CD4-positive, alpha-beta T cell (primary cell): ENCODE measurements at regions of chr10 and their contacts with region 1.

Region 1: DNA sequence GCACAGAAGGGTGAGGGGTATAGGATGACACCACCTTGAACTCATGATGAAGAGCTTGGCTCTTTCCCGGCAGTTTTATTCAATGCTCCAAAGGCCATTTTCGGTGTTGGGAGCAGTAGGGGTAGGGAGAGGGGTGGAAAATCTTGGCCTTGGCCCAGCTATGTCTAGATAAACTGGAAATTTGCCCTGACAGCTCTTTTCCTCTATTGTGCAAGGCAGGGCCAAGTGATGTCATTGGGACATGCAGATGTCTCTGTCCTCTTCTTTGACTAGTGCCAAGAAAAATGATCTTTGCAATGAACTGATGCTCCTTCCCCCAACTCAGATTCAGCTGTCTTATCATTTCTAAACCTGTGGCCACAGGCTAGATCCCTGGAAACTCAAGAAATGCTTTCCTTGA is 27.7 kb upstream of the PRKCQ start:
- DNase-seq: no peak
- ATAC-seq: no peak
- H3K4me3 ChIP-seq: no peak overlapping the region
- H3K4me3 Mint-ChIP-seq: no peak overlapping the region
- H3K27ac ChIP-seq: peak overlapping the region in 1 of 2 donors; percentile 72
- H3K27ac Mint-ChIP-seq: peak overlapping the region; percentile 90
- H3K4me1 ChIP-seq: peaks cover 18% of the 10 kb centered on the region
- H3K4me1 Mint-ChIP-seq: peaks cover 80% of the 10 kb centered on the region
- H3K27me3 ChIP-seq: no peaks in the 10 kb centered on the region
- H3K27me3 Mint-ChIP-seq: no peaks in the 10 kb centered on the region
- CTCF ChIP-seq: no peak

Region 2: DNA sequence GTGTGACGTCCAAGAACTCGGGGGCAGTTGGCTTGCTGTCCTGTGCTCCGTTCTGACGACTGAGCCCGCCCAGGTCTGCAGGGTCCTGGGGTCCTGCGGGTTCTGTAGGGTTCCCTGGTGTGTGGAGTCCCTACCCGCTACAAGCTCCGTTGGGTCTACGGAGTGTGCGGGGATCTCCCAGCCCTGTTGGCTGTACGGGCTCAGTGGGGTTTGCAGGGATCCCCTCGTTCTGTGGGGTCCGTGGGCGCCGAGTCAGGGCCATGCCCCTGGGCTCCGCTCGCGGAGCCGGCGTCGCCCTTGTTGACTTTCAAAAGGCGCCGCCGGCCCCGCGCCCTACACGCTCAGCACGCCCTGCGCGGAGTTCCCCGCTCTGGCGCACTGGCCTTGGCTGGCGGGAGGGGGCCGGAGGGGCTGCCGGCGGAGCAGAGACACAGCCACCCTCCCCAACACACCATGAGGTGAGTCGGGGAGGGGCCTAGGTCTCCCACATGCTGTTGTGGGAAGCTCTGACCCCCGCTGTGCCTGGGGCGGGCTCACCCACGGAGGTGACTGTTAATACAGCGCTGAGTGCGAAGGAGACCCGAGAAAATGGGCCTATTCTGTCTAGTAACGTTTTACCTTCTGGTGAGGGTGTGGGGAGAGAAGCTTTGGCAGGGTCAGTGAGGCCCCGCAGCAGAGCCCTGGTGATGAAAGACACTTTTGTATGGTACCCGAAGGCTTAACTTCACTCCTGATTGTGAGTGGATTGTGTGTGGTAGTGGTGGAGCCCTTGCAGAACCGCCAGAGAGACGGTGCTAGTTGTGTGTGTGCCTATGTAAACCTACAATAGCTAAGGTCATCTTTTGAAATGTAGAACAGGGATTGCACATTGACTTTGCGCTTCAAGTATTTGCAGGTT is 915.1 kb before region 1 on chr10:
- CTCF ChIA-PET with region 1: no interaction called
- POLR2A ChIA-PET with region 1: no interaction called
- intact Hi-C with region 1: no loop called
- DNase-seq: peak; percentile 27 to 85 (median 54)
- ATAC-seq: peak; percentile 90
- H3K4me3 ChIP-seq: peak overlapping the region; percentile 57
- H3K4me3 Mint-ChIP-seq: peak overlapping the region; percentile 85
- H3K27ac ChIP-seq: no peak overlapping the region
- H3K27ac Mint-ChIP-seq: peak overlapping the region; percentile 66
- H3K4me1 ChIP-seq: peaks cover 41% of the 10 kb centered on the region
- H3K4me1 Mint-ChIP-seq: peaks cover 85% of the 10 kb centered on the region
- H3K27me3 ChIP-seq: no peaks in the 10 kb centered on the region
- H3K27me3 Mint-ChIP-seq: no peaks in the 10 kb centered on the region
- CTCF ChIP-seq: no peak

Region 3: GRCh38 chr10:6416892-6417512 is 190.8 kb before region 1 on chr10:
- CTCF ChIA-PET with region 1: no interaction called
- POLR2A ChIA-PET with region 1: no interaction called
- intact Hi-C with region 1: loop called in 1 of 2 experiments (anchors 5 kb)
- DNase-seq: peak in 4 of 14 experiments; percentile 22 to 76 (median 74)
- ATAC-seq: peak; percentile 76
- H3K4me3 ChIP-seq: no peak overlapping the region
- H3K4me3 Mint-ChIP-seq: no peak overlapping the region
- H3K27ac ChIP-seq: no peak overlapping the region
- H3K27ac Mint-ChIP-seq: no peak overlapping the region
- H3K4me1 ChIP-seq: no peaks in the 10 kb centered on the region
- H3K4me1 Mint-ChIP-seq: peaks cover 5% of the 10 kb centered on the region
- H3K27me3 ChIP-seq: no peaks in the 10 kb centered on the region
- H3K27me3 Mint-ChIP-seq: no peaks in the 10 kb centered on the region
- CTCF ChIP-seq: peak; percentile 86

Region 4: GRCh38 chr10:6445501-6446316 is 162.1 kb before region 1 on chr10:
- CTCF ChIA-PET with region 1: interaction called, 5 read pairs
- POLR2A ChIA-PET with region 1: no interaction called
- intact Hi-C with region 1: loop called in 1 of 2 experiments (anchors 5 kb)
- DNase-seq: peak; percentile 27 to 79 (median 61)
- ATAC-seq: peak; percentile 64
- H3K4me3 ChIP-seq: no peak overlapping the region
- H3K4me3 Mint-ChIP-seq: no peak overlapping the region
- H3K27ac ChIP-seq: no peak overlapping the region
- H3K27ac Mint-ChIP-seq: peak overlapping the region; percentile 68
- H3K4me1 ChIP-seq: peaks cover 11% of the 10 kb centered on the region
- H3K4me1 Mint-ChIP-seq: peaks cover 30% of the 10 kb centered on the region
- H3K27me3 ChIP-seq: no peaks in the 10 kb centered on the region
- H3K27me3 Mint-ChIP-seq: no peaks in the 10 kb centered on the region
- CTCF ChIP-seq: peak; percentile 77

Region 5: DNA sequence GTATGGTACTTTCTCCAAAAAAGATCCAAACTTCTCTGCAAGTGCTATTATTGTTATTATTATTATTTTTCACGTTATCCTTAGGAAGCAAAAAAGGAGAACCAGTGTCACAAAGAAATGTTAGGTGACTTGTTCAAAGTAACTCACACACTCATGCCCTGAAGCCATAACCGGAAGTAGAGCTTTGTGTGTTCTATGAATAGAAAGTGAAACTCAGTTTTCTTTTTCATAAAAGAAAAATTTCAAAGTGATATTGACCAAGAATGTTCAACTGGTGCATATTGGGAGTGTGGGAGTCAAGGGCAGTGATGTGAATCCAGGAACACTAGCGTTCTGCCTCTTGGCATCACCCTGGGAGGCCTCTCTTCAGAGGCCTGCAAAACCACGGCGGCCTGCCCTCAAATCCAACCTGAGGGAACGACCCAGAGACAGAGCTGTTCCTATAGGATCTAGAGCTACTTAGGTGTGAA is 133.8 kb before region 1 on chr10:
- CTCF ChIA-PET with region 1: interaction called, 20 read pairs
- POLR2A ChIA-PET with region 1: interaction called, 15 read pairs
- intact Hi-C with region 1: loop called in 1 of 2 experiments (anchors 2 kb)
- DNase-seq: peak in 6 of 14 experiments; percentile 25 to 85 (median 56)
- ATAC-seq: peak; percentile 75
- H3K4me3 ChIP-seq: peak overlapping the region; percentile 47
- H3K4me3 Mint-ChIP-seq: peak overlapping the region; percentile 83
- H3K27ac ChIP-seq: peak overlapping the region; percentile 69 to 75
- H3K27ac Mint-ChIP-seq: peak overlapping the region; percentile 95
- H3K4me1 ChIP-seq: peaks cover 23% of the 10 kb centered on the region
- H3K4me1 Mint-ChIP-seq: peaks cover 65% of the 10 kb centered on the region
- H3K27me3 ChIP-seq: no peaks in the 10 kb centered on the region
- H3K27me3 Mint-ChIP-seq: no peaks in the 10 kb centered on the region
- CTCF ChIP-seq: no peak

Region 6: GRCh38 chr10:6593241-6593671 is 14.5 kb before region 1 on chr10:
- CTCF ChIA-PET with region 1: no interaction called
- POLR2A ChIA-PET with region 1: interaction called, 19 read pairs
- intact Hi-C with region 1: no loop called
- DNase-seq: peak in 5 of 14 experiments; percentile 16 to 64 (median 50)
- ATAC-seq: peak; percentile 67
- H3K4me3 ChIP-seq: no peak overlapping the region
- H3K4me3 Mint-ChIP-seq: peak overlapping the region; percentile 66
- H3K27ac ChIP-seq: peak overlapping the region; percentile 79 to 83
- H3K27ac Mint-ChIP-seq: peak overlapping the region; percentile 94
- H3K4me1 ChIP-seq: peaks cover 54% of the 10 kb centered on the region
- H3K4me1 Mint-ChIP-seq: peaks cover 97% of the 10 kb centered on the region
- H3K27me3 ChIP-seq: no peaks in the 10 kb centered on the region
- H3K27me3 Mint-ChIP-seq: no peaks in the 10 kb centered on the region
- CTCF ChIP-seq: no peak

Region 7: DNA sequence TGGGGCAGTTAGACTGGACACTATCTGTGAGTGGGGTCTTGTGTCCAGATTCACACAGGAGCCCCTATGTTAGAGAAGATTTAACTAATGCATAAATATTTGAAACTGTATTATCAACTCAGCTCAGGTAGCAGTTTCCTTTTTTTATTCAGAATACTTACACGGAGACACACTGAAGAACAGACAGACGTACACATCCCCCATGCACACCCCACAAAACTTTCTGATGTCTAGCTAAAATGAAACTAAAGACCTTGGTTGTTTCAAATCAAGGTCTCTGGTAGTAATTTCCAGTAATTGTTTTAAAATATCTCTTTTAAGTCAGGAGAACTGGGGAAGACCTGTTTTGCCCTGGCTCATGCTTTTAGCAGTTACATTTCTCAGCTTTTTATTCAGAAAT is 28.0 kb after region 1 on chr10:
- CTCF ChIA-PET with region 1: no interaction called
- POLR2A ChIA-PET with region 1: no interaction called
- intact Hi-C with region 1: no loop called
- DNase-seq: no peak
- ATAC-seq: no peak
- H3K4me3 ChIP-seq: no peak overlapping the region
- H3K4me3 Mint-ChIP-seq: no peak overlapping the region
- H3K27ac ChIP-seq: no peak overlapping the region
- H3K27ac Mint-ChIP-seq: peak overlapping the region; percentile 27
- H3K4me1 ChIP-seq: no peaks in the 10 kb centered on the region
- H3K4me1 Mint-ChIP-seq: peaks cover 21% of the 10 kb centered on the region
- H3K27me3 ChIP-seq: no peaks in the 10 kb centered on the region
- H3K27me3 Mint-ChIP-seq: no peaks in the 10 kb centered on the region
- CTCF ChIP-seq: no peak

Region 8: DNA sequence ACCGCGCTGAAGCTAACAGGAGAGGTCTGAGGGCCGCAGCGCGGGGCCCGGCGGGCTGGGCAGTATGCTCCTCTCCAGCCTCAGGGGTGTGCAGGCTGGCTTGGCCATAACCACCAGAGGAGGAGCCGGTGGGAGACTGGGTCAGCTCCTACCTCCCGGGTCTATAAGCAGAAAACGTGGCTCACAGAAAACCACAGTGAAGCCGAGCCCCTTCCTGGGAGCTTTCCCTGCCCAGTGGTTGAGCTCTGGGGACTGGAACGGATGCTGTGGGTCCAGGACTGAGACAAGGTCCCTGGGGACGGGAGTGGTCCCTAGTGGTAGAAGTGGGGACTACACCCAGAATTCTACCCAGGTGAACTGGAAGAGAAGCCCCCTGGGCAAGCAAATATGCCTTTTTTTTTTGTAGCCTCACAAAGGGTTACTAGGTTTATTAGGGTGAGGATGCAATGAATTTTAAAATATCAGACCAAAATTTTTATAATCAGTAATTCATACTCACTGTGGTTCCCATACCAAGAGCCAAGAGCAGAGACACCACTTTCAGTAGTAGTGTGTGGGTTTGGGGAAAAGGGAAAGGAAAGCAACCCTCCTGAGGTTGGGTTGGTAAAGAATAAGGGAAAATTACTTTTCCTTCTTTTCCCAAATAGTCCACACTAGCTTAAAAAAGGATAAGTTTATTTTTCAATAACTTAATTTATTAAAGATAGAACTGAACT is 40.2 kb after region 1 on chr10:
- CTCF ChIA-PET with region 1: interaction called, 6 read pairs
- POLR2A ChIA-PET with region 1: interaction called, 4 read pairs
- intact Hi-C with region 1: loop called in 1 of 2 experiments (anchors 5 kb)
- DNase-seq: peak; percentile 41 to 82 (median 60)
- ATAC-seq: peak; percentile 97
- H3K4me3 ChIP-seq: no peak overlapping the region
- H3K4me3 Mint-ChIP-seq: no peak overlapping the region
- H3K27ac ChIP-seq: no peak overlapping the region
- H3K27ac Mint-ChIP-seq: no peak overlapping the region
- H3K4me1 ChIP-seq: peaks cover 16% of the 10 kb centered on the region
- H3K4me1 Mint-ChIP-seq: peaks cover 17% of the 10 kb centered on the region
- H3K27me3 ChIP-seq: no peaks in the 10 kb centered on the region
- H3K27me3 Mint-ChIP-seq: no peaks in the 10 kb centered on the region
- CTCF ChIP-seq: peak; percentile 93

Region 9: DNA sequence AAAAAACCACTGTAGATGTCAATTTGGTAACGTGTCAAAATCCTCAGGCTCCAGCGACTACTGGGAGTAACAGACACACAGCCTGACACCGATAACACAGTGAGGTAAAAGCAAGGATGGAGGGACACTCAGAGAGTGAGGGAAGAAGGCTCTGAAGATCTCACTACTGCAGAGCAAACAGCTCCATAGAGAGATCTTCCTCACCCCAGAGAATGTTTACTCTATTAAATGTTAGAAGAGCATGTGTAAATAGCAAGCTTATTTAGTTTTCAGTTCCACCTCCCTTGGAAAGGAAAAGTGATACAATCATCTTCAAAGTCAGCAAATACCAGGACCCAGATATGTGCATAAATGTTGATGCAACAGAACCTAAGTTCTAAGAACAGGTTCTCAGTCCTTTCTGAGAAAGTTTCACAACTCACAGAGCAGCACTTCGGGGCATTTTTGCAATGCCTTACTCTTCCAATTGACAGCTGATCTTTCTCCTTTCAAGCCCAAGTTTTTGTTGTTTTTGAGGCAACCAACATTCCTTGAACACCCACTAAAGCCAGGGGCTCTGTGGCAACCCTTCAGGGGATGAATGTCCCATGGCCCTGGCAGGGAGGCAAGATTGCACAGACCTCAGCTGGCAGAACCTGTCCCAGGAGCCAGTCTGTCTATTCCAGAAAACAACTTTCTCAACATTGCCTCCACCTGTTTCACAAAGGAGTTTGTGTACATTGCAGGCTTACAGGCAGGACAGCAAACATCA is 625.7 kb after region 1 on chr10:
- CTCF ChIA-PET with region 1: no interaction called
- POLR2A ChIA-PET with region 1: no interaction called
- intact Hi-C with region 1: no loop called
- DNase-seq: no peak
- ATAC-seq: no peak
- H3K4me3 ChIP-seq: no peak overlapping the region
- H3K4me3 Mint-ChIP-seq: no peak overlapping the region
- H3K27ac ChIP-seq: no peak overlapping the region
- H3K27ac Mint-ChIP-seq: no peak overlapping the region
- H3K4me1 ChIP-seq: no peaks in the 10 kb centered on the region
- H3K4me1 Mint-ChIP-seq: peaks cover 9% of the 10 kb centered on the region
- H3K27me3 ChIP-seq: no peaks in the 10 kb centered on the region
- H3K27me3 Mint-ChIP-seq: no peaks in the 10 kb centered on the region
- CTCF ChIP-seq: no peak